Activated CD4-positive, alpha-beta memory T cell treated with anti-CD3 and anti-CD28 coated beads, Interleukin-2, amount 10 ng/mL, durations not matched to agents 7 days and 5 days (primary cell): ENCODE measurements at regions of chr17 and their contacts with region 1.

Region 1: DNA sequence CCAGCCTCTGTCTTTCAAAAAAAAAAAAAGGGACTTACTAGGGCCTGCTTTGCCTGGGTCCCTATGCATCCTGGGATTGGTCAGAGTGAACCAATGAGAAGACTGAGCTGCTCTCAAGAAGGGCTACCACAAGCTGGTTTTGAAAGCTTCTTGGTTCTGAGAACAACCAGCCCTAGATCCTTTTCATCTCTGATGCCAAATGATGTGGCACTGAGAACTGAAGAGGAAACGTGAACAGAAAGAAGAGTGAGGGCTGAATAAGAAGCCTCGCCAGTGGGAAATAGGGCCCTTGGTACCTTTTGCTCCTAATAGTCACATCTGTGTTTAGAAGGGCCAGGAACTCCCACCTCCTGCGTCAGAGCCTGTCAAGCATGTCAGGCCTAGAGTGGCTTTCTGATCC is 10.7 kb downstream of the TACO1 start:
- DNase-seq: peak; percentile 57
- H3K4me3 Mint-ChIP-seq: peak overlapping the region; percentile 70
- H3K27ac Mint-ChIP-seq: peak overlapping the region; percentile 99
- H3K4me1 Mint-ChIP-seq: peaks cover 34% of the 10 kb centered on the region
- H3K27me3 Mint-ChIP-seq: no peaks in the 10 kb centered on the region

Region 2: GRCh38 chr17:63419949-63420867 is 191.1 kb before region 1 on chr17:
- CTCF ChIA-PET with region 1: interaction called, 180 read pairs
- POLR2A ChIA-PET with region 1: interaction called, 27 read pairs
- DNase-seq: peak; percentile 77
- H3K4me3 Mint-ChIP-seq: peak overlapping the region; percentile 38
- H3K27ac Mint-ChIP-seq: peak overlapping the region; percentile 79
- H3K4me1 Mint-ChIP-seq: peaks cover 20% of the 10 kb centered on the region
- H3K27me3 Mint-ChIP-seq: no peaks in the 10 kb centered on the region

Region 3: GRCh38 chr17:63434876-63435684 is 176.3 kb before region 1 on chr17:
- CTCF ChIA-PET with region 1: interaction called, 180 read pairs
- POLR2A ChIA-PET with region 1: interaction called, 13 read pairs
- DNase-seq: peak; percentile 82
- H3K4me3 Mint-ChIP-seq: peak overlapping the region; percentile 44
- H3K27ac Mint-ChIP-seq: peak overlapping the region; percentile 84
- H3K4me1 Mint-ChIP-seq: peaks cover 68% of the 10 kb centered on the region
- H3K27me3 Mint-ChIP-seq: no peaks in the 10 kb centered on the region

Region 4: GRCh38 chr17:63478791-63479494 is 132.4 kb before region 1 on chr17:
- CTCF ChIA-PET with region 1: interaction called, 35 read pairs
- POLR2A ChIA-PET with region 1: interaction called, 7 read pairs
- DNase-seq: peak; percentile 84
- H3K4me3 Mint-ChIP-seq: peak overlapping the region; percentile 74
- H3K27ac Mint-ChIP-seq: no peak overlapping the region
- H3K4me1 Mint-ChIP-seq: peaks cover 16% of the 10 kb centered on the region
- H3K27me3 Mint-ChIP-seq: peaks cover 33% of the 10 kb centered on the region

Region 5: GRCh38 chr17:63600569-63601438 is 10.6 kb before region 1 on chr17 and contains the start of gene TACO1:
- CTCF ChIA-PET with region 1: interaction called, 35 read pairs
- POLR2A ChIA-PET with region 1: interaction called, 49 read pairs
- DNase-seq: peak; percentile 81
- H3K4me3 Mint-ChIP-seq: peak within 1 kb of the TSS; percentile 97
- H3K27ac Mint-ChIP-seq: peak within 1 kb of the TSS; percentile 92
- H3K4me1 Mint-ChIP-seq: peaks cover 51% of the 10 kb centered on the region
- H3K27me3 Mint-ChIP-seq: no peaks in the 10 kb centered on the region
- total RNA-seq, gene TACO1: 26.7 to 27.9 TPM

Region 6: DNA sequence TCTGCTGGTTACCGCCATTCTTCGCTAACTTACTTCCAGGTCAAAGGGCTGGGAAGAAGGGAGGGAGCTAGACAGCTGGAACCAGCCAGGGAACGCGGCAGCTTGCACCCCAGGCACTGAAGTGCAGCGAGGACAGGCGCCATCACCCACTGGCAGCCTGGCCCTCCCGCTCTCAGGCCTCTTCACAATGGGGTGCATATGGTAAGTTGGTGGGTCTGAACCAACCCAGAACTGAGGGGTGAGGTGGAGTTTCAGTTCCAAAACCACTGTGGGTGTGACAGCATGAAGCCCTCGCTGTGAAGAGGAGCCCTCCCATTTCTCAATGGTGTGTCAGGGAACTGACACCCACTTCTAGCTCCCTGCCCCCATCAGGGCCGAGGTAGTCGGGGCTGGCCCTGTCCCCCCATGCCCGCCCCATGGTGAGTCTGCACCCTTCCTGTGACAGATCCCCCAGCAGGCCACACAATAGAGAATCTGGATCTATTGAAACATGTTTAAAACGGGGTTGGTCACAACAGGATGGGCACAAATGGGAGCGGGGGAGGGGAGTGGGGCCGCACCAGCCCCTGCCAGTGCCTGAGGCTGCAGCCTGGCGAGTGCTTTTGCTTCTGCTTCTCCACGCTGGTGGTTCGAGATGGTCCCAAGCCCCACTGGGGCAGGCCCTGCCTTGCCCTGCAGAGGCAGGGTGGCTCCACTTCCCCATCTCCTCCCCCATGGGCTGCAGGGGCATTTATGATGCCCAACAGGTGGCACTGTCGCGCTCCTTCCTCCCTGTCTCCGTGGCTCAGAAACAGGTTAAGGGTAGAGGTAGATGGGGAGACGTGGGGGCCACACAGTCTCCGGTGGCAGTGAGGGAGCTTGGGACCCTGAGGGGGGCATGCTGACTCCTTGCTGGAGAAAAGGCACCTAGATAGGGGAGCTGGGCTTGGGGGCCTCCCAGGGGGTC is 86.3 kb after region 1 on chr17:
- CTCF ChIA-PET with region 1: interaction called, 3 read pairs
- POLR2A ChIA-PET with region 1: interaction called, 20 read pairs
- DNase-seq: peak; percentile 89
- H3K4me3 Mint-ChIP-seq: peak overlapping the region; percentile 96
- H3K27ac Mint-ChIP-seq: peak overlapping the region; percentile 96
- H3K4me1 Mint-ChIP-seq: peaks cover 48% of the 10 kb centered on the region
- H3K27me3 Mint-ChIP-seq: no peaks in the 10 kb centered on the region